ENCODE measurements at regions of chr7 and their contacts with region 1.

Region 1: GRCh38 chr7:100081535-100082102 is at the start of gene ZNF3:
- DNase-seq: peak; percentile 96
- ATAC-seq: peak; percentile 80
- H3K4me3 Mint-ChIP-seq: peak within 1 kb of the TSS; percentile 89
- H3K27ac Mint-ChIP-seq: peak within 1 kb of the TSS; percentile 91
- H3K4me1 Mint-ChIP-seq: peaks cover 34% of the 10 kb centered on the region
- H3K27me3 Mint-ChIP-seq: no peaks in the 10 kb centered on the region
- CTCF ChIP-seq: peak; percentile 58
- total RNA-seq, gene ZNF3: 33.9 and 39.6 TPM in 2 replicates

Region 2: DNA sequence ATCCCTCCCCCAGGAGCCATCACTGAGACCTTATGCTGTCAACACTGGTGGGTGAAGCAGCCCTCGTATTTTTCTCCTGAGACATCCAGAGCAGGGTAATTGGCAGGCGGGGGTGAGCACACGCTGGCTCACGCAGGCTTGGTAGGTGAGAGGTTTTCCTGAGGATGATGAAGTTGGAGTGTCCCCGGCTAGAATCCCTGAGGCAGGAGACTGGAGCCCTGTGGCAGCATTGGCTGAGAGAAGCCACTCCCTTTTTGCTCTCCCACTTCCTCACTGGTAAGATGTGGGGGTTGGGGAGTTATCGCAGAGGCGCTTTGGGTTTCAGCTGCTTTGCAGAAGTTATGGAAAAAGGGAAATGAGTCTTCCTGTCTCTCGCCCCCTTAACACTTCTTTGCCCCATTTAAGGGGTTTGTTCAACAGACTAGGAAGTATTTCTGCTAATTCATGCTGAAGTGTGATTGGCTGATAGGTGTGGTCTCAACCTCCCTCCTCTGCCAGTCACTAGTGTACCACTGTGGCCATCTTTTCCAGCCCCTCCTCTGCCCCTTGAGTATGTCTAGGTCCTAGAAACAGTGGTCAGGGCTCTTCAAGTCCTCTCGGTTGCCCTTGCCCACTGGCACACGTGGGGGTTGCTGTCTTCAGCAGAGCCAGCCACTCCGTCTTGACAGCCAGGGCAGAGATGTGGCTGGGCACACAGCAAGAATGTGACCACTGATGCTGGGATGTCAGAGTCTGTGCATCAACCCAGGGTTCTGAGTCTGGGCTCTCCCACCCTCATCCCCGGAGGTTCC is 701.4 kb before region 1 on chr7:
- CTCF ChIA-PET with region 1: no interaction called
- POLR2A ChIA-PET with region 1: interaction called, 3 read pairs
- intact Hi-C with region 1: loop called (anchors 2 kb)
- DNase-seq: peak; percentile 34
- ATAC-seq: peak; percentile 35
- H3K4me3 Mint-ChIP-seq: peak overlapping the region; percentile 83
- H3K27ac Mint-ChIP-seq: peak overlapping the region; percentile 98
- H3K4me1 Mint-ChIP-seq: peaks cover 71% of the 10 kb centered on the region
- H3K27me3 Mint-ChIP-seq: no peaks in the 10 kb centered on the region
- CTCF ChIP-seq: no peak

Region 3: GRCh38 chr7:99910976-99911375 is 170.6 kb before region 1 on chr7:
- CTCF ChIA-PET with region 1: no interaction called
- POLR2A ChIA-PET with region 1: no interaction called
- intact Hi-C with region 1: loop called (anchors 1 kb)
- DNase-seq: no peak
- ATAC-seq: no peak
- H3K4me3 Mint-ChIP-seq: no peak overlapping the region
- H3K27ac Mint-ChIP-seq: no peak overlapping the region
- H3K4me1 Mint-ChIP-seq: peaks cover 28% of the 10 kb centered on the region
- H3K27me3 Mint-ChIP-seq: no peaks in the 10 kb centered on the region
- CTCF ChIP-seq: no peak

Region 4: GRCh38 chr7:100015232-100016209 is 66.1 kb before region 1 on chr7 and contains the start of gene ZKSCAN1:
- CTCF ChIA-PET with region 1: no interaction called
- POLR2A ChIA-PET with region 1: interaction called, 17 read pairs
- intact Hi-C with region 1: loop called (anchors 1 kb)
- DNase-seq: peak; percentile 76
- ATAC-seq: peak; percentile 97
- H3K4me3 Mint-ChIP-seq: peak within 1 kb of the TSS; percentile 90
- H3K27ac Mint-ChIP-seq: peak within 1 kb of the TSS; percentile 84
- H3K4me1 Mint-ChIP-seq: peaks cover 34% of the 10 kb centered on the region
- H3K27me3 Mint-ChIP-seq: peaks cover 6% of the 10 kb centered on the region
- CTCF ChIP-seq: no peak
- total RNA-seq, gene ZKSCAN1: 59.0 and 70.6 TPM in 2 replicates

Region 5: DNA sequence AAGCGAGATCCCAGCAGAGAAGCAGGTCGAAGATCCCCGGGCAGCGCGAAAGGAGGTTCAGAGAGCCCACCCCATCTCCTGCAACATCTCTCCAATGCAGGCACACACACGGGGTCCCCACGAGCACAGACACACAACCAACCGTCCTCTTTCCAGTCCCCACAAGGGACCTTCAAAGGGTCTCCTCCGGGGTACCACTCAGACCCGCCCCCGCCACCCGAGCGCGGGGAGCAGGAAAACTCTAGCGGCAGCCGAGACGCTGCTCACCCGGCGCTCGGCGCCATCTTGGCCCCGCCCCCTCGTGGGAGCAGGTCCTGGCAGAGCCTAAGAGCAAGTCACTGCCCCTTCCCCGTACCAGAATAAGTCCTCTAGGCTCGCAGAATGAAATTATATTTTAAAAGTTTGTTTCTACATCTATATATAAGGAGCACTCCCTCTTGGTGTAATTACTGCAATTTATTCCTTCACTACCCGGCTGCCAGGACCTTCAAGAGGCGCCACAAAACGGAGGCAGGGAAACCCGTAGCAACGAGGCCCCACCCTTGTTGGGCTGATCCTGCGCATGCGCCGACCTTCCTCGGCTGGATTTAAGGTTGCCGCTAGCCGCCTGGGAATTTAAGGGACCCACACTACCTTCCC is 37.6 kb after region 1 on chr7 and contains the starts of genes CNPY4 and TAF6:
- CTCF ChIA-PET with region 1: no interaction called
- POLR2A ChIA-PET with region 1: interaction called, 5 read pairs
- intact Hi-C with region 1: loop called (anchors 1 kb)
- DNase-seq: peak; percentile 88
- ATAC-seq: peak; percentile 86
- H3K4me3 Mint-ChIP-seq: peak within 1 kb of the TSS; percentile 98
- H3K27ac Mint-ChIP-seq: peak within 1 kb of the TSS; percentile 99
- H3K4me1 Mint-ChIP-seq: peaks cover 29% of the 10 kb centered on the region
- H3K27me3 Mint-ChIP-seq: no peaks in the 10 kb centered on the region
- CTCF ChIP-seq: no peak
- total RNA-seq, gene CNPY4: 7.1 and 8.6 TPM in 2 replicates
- total RNA-seq, gene TAF6: 42.6 and 54.9 TPM in 2 replicates

Region 6: DNA sequence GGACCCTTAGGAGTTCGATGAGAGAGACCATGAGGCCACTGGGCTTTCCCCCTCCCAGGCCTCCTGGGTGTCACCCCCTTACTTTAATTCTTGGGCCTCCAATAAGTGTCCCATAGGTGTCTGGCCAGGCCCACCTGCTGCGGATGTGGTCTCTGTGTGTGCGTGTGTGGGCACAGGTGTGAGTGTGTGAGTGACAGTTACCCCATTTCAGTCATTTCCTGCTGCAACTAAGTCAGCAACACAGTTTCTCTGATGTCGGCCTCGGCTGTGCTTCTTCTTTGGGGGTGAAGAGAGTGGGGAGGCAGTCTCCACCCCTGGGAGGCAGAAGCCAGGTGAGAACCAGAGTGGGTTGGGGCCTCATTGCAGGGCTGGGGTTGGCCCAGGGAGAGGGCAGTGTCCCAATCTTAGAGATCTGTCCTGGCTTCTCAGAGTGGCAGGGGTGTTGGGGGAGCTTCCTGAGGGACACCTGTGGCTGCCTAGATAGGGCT is 139.7 kb after region 1 on chr7:
- CTCF ChIA-PET with region 1: no interaction called
- POLR2A ChIA-PET with region 1: no interaction called
- intact Hi-C with region 1: loop called (anchors 2 kb)
- DNase-seq: peak; percentile 48
- ATAC-seq: peak; percentile 40
- H3K4me3 Mint-ChIP-seq: peak overlapping the region; percentile 86
- H3K27ac Mint-ChIP-seq: peak overlapping the region; percentile 95
- H3K4me1 Mint-ChIP-seq: peaks cover 84% of the 10 kb centered on the region
- H3K27me3 Mint-ChIP-seq: no peaks in the 10 kb centered on the region
- CTCF ChIP-seq: no peak

Region 7: GRCh38 chr7:100673300-100673941 is 591.8 kb after region 1 on chr7 and contains the start of gene GNB2:
- CTCF ChIA-PET with region 1: no interaction called
- POLR2A ChIA-PET with region 1: no interaction called
- intact Hi-C with region 1: loop called (anchors 10 kb)
- DNase-seq: peak; percentile 99
- ATAC-seq: peak; percentile 67
- H3K4me3 Mint-ChIP-seq: peak within 1 kb of the TSS; percentile 97
- H3K27ac Mint-ChIP-seq: peak within 1 kb of the TSS; percentile 95
- H3K4me1 Mint-ChIP-seq: peaks cover 11% of the 10 kb centered on the region
- H3K27me3 Mint-ChIP-seq: no peaks in the 10 kb centered on the region
- CTCF ChIP-seq: no peak
- total RNA-seq, gene GNB2: 129 and 132 TPM in 2 replicates

Region 8: GRCh38 chr7:100736671-100737070 is 655.1 kb after region 1 on chr7:
- CTCF ChIA-PET with region 1: no interaction called
- POLR2A ChIA-PET with region 1: no interaction called
- intact Hi-C with region 1: no loop called
- DNase-seq: no peak
- ATAC-seq: no peak
- H3K4me3 Mint-ChIP-seq: no peak overlapping the region
- H3K27ac Mint-ChIP-seq: no peak overlapping the region
- H3K4me1 Mint-ChIP-seq: peaks cover 14% of the 10 kb centered on the region
- H3K27me3 Mint-ChIP-seq: peaks cover 4% of the 10 kb centered on the region
- CTCF ChIP-seq: no peak